ENCODE measurements at regions of chr3 and their contacts with region 1.

Region 1: GRCh38 chr3:46488735-46489361 is 8.9 kb upstream of the RTP3 start:
- DNase-seq: peak; percentile 95
- H3K4me3 ChIP-seq: peak overlapping the region in 1 of 2 experiments; percentile 51; a peak in 1 of 4 replicates
- H3K27ac ChIP-seq: no peak overlapping the region
- H3K4me1 ChIP-seq: peaks cover 0 to 3% of the 10 kb centered on the region in 2 experiments; a peak in 1 of 4 replicates
- H3K27me3 ChIP-seq: no peaks in the 10 kb centered on the region; the same call in 1 of the 2 replicates
- CTCF ChIP-seq: peak; percentile 93
- EP300 ChIP-seq: no peak
- RAD21 ChIP-seq: peak; percentile 99

Region 2: DNA sequence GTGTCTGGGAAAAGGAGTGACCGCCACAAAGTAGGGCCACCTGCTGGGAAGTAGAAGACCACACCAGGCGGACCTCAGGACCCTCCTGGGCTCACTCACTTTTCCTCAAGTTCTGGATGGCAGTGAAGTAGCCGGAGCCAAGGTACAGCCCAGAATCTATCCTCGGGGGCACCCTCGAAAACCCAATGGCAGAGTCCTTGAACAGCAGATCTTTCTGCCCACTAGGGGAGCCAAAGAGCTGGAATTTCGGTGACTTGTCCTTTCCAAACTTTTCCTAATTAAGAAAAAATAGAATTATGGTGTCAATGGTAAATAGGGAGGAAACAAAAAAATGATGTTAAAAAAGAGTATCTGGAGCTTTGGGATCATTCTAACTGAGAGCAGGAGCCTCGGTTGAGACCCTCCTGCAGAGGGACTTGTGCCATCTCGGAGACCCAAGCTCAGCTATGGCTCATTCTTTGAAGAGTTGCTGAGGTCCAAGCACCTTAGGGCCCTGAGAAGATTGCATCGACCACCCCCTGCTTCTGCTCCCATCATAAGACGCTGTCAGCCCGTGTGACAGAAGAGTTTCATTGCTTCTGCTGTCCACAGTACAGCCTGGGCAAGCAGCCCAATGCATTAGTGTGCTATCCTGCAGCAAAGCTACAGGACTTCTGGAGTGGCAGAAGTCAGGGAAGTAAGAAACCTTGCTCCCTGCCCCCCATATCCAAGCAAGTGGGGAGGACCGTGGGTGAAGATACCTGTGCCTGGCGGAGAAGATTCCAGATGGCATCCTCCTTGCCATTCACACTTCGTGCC is 38.9 kb before region 1 on chr3:
- CTCF ChIA-PET with region 1: interaction called, 14 read pairs
- POLR2A ChIA-PET with region 1: no interaction called
- DNase-seq: peak; percentile 58
- H3K4me3 ChIP-seq: no peak overlapping the region
- H3K27ac ChIP-seq: no peak overlapping the region
- H3K4me1 ChIP-seq: no peaks in the 10 kb centered on the region
- H3K27me3 ChIP-seq: 0 out of 2 replicates have a peak, but pooled peaks cover 8% of the 10 kb centered on the region
- CTCF ChIP-seq: peak; percentile 65
- EP300 ChIP-seq: no peak
- RAD21 ChIP-seq: no peak

Region 3: DNA sequence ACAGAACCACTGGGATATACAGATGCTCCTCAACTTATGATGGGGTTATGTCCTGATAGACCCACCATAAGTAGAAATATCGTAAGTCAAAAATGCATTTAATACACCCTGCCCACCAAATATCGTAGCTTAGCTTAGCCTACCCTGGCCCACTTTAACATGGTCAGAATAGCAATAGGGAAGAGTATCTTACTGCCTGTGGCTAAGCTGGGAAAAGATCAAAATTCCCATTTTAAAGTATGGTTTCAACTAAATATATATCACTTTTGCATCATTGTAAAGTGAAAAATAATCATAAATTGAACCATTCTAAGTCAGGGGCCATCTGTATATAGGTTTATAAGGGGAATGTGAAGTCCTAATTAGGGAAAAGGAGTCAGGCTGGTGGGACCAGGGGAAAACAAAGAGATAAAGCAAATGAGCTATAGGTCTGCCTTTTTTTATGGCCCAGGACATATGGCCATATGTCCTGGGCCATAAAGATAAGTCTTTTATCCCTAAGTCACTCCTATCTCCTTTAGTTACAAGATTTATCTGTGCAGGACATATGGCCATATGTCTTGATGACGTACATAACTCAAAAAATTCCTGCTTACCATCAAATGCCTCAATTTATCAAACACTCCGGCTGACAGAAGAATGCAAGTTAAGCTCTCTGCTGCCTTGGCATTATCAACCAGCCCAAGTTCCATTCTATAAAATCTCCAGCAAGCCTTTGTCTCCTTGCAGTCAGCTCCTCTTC is 20.2 kb after region 1 on chr3:
- CTCF ChIA-PET with region 1: interaction called, 18 read pairs
- POLR2A ChIA-PET with region 1: no interaction called
- DNase-seq: no peak
- H3K4me3 ChIP-seq: no peak overlapping the region
- H3K27ac ChIP-seq: no peak overlapping the region
- H3K4me1 ChIP-seq: no peaks in the 10 kb centered on the region
- H3K27me3 ChIP-seq: no peaks in the 10 kb centered on the region
- CTCF ChIP-seq: no peak
- EP300 ChIP-seq: no peak
- RAD21 ChIP-seq: no peak

Region 4: DNA sequence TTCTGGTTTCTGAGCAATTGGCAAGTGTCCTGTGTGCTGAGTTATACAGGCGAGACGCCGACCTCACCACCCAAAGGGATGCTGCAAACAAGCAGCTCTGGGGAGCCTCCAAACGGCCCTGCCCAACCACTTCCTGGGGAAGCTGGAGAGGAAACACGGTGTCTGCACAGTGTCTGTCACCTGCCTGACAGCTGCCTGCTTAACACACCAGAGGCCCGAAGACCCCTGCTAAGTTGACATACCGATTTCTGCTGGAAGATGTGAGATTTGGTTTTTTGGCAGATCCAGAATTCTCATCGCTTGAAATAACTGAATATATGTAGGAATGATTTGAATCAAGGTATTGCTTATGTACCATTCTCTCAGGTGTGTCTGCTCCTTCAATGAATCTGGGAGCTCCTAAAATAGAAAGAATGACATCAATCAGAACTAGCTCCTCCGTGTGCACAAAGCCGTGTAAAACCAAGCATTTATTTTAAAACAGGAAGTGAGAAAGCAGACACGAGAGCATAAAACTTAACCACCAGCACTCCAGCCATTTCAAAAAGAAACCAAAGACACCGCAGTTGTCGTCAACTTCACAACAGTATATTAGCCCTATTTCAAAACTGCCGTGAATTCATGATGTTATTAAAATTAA is 50.1 kb after region 1 on chr3:
- CTCF ChIA-PET with region 1: interaction called, 50 read pairs
- POLR2A ChIA-PET with region 1: no interaction called
- DNase-seq: no peak
- H3K4me3 ChIP-seq: no peak overlapping the region
- H3K27ac ChIP-seq: no peak overlapping the region
- H3K4me1 ChIP-seq: peaks cover 0 to 3% of the 10 kb centered on the region in 2 experiments; a peak in 1 of 4 replicates
- H3K27me3 ChIP-seq: no peaks in the 10 kb centered on the region
- CTCF ChIP-seq: no peak
- EP300 ChIP-seq: no peak
- RAD21 ChIP-seq: no peak

Region 5: GRCh38 chr3:46615050-46615775 is 126.4 kb after region 1 on chr3:
- CTCF ChIA-PET with region 1: interaction called, 12 read pairs
- POLR2A ChIA-PET with region 1: no interaction called
- DNase-seq: no peak
- H3K4me3 ChIP-seq: no peak overlapping the region
- H3K27ac ChIP-seq: no peak overlapping the region
- H3K4me1 ChIP-seq: peaks cover 0 to 15% of the 10 kb centered on the region in 2 experiments; a peak in 2 of 4 replicates
- H3K27me3 ChIP-seq: no peaks in the 10 kb centered on the region; the same call in 1 of the 2 replicates
- CTCF ChIP-seq: no peak
- EP300 ChIP-seq: no peak
- RAD21 ChIP-seq: no peak

Region 6: GRCh38 chr3:46670620-46671427 is 182.0 kb after region 1 on chr3:
- CTCF ChIA-PET with region 1: interaction called, 54 read pairs
- POLR2A ChIA-PET with region 1: no interaction called
- DNase-seq: peak; percentile 11
- H3K4me3 ChIP-seq: no peak overlapping the region
- H3K27ac ChIP-seq: no peak overlapping the region
- H3K4me1 ChIP-seq: peaks cover 0 to 21% of the 10 kb centered on the region in 2 experiments; a peak in 1 of 4 replicates
- H3K27me3 ChIP-seq: no peaks in the 10 kb centered on the region
- CTCF ChIP-seq: no peak
- EP300 ChIP-seq: no peak
- RAD21 ChIP-seq: no peak

Region 7: GRCh38 chr3:46845791-46846623 is 357.2 kb after region 1 on chr3:
- CTCF ChIA-PET with region 1: interaction called, 11 read pairs
- POLR2A ChIA-PET with region 1: no interaction called
- DNase-seq: peak; percentile 98
- H3K4me3 ChIP-seq: peak overlapping the region; percentile 46 to 49; a peak in 3 of 4 replicates
- H3K27ac ChIP-seq: peak overlapping the region; percentile 38 to 98
- H3K4me1 ChIP-seq: peaks cover 0 to 27% of the 10 kb centered on the region in 2 experiments; a peak in 2 of 4 replicates
- H3K27me3 ChIP-seq: no peaks in the 10 kb centered on the region
- CTCF ChIP-seq: peak; percentile 53
- EP300 ChIP-seq: peak in 1 of 2 experiments; percentile 21; a peak in 1 of 4 replicates
- RAD21 ChIP-seq: peak; percentile 64

Region 8: DNA sequence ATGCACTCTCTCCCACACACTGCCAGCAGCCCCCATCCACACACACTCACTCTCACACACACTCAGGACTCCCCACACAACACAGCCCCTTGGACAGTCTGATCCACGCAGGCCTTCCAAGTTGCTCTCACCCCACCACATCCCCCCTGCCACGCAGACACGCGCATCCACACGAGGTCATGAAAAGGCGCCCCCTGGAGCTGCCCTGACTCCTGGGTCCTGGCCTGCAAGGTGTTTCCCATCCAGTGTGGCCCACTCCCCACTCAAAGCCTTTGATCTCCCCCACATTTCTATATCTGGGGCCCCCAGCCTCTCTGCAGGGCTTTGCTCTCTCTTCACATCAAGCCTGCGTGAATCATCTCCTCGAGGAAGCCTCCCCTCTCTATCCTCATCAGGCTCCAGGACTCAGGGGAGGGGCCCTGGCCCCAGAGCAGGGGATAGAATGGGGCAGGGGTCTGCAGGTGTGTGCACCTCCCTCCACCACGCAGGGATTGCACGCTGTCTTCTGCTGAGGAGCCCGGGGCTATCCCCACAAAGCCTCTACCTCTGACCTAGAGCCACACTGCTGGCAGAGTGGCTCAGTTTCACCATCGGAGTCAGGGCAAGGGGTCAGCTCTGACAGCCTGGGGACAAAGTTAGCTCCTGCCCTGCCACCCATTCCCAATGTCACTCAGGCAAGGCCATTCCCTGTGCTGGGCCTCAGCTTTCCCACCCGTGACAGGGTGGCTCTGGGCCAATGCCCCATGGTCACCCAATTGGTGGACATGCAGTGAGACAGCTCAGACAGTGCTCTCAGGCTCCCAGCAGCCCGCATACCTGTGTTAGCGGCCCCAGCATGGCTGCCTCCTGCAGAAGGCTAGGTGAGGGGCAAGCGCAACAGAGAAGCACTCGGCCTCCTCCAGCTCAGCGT is 368.0 kb after region 1 on chr3:
- CTCF ChIA-PET with region 1: no interaction called
- POLR2A ChIA-PET with region 1: no interaction called
- DNase-seq: no peak
- H3K4me3 ChIP-seq: no peak overlapping the region
- H3K27ac ChIP-seq: no peak overlapping the region
- H3K4me1 ChIP-seq: peaks cover 0 to 5% of the 10 kb centered on the region in 2 experiments; a peak in 1 of 4 replicates
- H3K27me3 ChIP-seq: peaks cover 7% of the 10 kb centered on the region; the same call in 1 of the 2 replicates
- CTCF ChIP-seq: no peak
- EP300 ChIP-seq: no peak
- RAD21 ChIP-seq: no peak